Posterior vena cava (tissue), 2 donors: ENCODE measurements at regions of chr9 and their contacts with region 1.

Region 1: GRCh38 chr9:111136180-111136579 is 97.9 kb upstream of the LPAR1 start:
- DNase-seq: no peak

Region 2: DNA sequence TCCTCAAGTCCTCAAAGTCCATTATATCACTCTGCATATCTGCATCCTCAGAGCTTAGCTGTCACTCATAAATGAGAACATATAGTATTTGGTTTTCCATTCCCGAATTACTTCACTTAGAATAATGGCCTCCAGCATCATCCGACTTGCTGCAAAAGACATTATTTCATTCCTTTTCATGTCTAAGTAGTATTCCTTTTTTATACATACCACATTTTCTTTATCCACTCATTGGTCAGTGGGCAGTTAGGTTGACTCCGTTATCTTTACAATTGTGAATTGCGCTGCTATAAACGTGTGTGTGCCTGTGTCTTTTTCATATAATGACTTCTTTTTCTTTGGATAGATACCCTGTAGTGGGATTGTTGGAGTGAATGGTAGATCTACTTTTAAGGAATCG is 76.7 kb after region 1 on chr9:
- intact Hi-C with region 1: loop called in 1 of 2 experiments (anchors 2 kb)
- DNase-seq: no peak